ENCODE measurements at regions of chr4 and their contacts with region 1.

Region 1: DNA sequence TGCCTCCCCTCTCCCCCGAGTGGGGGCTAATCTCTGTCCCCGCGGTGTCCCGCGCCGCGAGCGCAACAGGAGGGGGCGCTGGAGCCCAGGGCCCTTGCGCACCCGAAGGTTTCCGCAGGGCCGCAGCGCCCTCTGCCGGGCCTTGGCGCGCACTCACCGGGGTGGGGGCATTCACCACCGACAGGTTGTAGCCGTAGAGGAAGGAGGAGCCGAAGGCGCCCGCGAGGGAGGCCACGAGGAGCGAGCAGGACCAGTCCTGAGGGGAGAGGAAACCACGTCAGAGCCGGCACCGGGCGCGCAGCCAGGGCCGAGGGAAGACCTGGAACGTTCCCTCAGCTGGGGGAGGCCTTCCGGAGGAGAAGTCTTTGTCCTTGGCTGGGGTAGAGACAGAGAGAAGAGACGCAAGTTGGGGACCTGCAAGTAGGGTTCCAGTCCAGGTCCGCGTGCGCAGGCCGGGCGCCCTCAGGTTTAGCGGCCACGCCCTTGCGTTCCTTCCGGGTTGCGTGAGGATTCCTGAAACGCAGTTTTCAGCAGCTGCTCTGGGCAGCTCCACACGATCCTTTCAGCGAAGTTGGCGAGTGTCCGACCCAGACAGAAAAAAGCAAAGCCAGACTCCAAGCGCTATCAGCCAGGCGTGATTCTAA is 2.4 kb downstream of the SLC2A9 start:
- DNase-seq: peak; percentile 99 to 100 (median 99)
- H3K4me3 ChIP-seq: peak overlapping the region; percentile 44
- H3K27ac ChIP-seq: peak overlapping the region; percentile 82 to 90
- H3K4me1 ChIP-seq: peaks cover 4% of the 10 kb centered on the region
- H3K27me3 ChIP-seq: no peaks in the 10 kb centered on the region
- CTCF ChIP-seq: peak; percentile 99 to 100 (median 99)
- EP300 ChIP-seq: no peak
- POLR2A ChIP-seq: peak; percentile 56

Region 2: GRCh38 chr4:9691238-9692065 is 327.5 kb before region 1 on chr4:
- intact Hi-C with region 1: loop called in 1 of 4 experiments (anchors 10 kb)
- DNase-seq: peak; percentile 96 to 98 (median 97)
- H3K4me3 ChIP-seq: peak overlapping the region; percentile 67
- H3K27ac ChIP-seq: peak overlapping the region; percentile 59 to 88
- H3K4me1 ChIP-seq: no peaks in the 10 kb centered on the region
- H3K27me3 ChIP-seq: no peaks in the 10 kb centered on the region
- CTCF ChIP-seq: no peak
- EP300 ChIP-seq: no peak
- POLR2A ChIP-seq: no peak

Region 3: DNA sequence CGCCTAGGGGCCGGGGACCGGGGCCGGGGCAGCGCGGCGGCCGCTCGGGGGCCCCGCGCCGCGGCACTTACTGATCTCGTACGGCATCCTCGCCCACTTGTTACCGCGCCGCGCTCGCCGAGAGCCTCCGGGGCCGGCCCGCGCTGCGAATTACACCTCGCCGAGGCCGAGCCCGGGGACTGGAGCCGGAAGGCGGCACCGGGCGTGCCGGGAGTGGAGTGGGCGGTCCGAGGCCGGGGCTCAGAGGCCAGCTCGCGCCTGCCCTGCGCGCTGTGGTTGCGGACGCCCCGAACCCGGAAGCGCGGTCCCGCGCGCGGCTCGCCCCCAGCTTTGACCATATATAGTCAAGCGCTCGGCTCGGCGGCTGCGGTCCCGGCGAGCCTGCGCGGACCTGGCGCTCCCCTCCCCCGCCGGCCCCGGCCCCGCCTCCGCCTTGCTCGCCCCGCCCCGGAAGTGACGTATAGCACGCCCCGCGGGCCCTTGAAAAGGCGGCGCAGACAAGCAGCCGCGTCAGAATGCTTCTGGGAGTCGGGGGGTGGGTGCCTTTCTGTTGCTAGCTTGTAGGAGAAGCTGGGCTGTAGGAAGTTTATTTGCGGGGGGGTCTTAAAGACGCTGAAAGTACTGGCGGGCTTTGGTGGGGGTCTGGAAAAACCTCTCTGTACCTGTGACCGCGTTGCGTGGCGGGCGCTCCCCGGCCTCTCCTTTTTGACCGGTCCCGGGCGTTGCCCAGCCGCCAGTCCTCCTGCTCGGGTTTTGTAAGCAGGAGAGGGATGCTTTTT is 97.8 kb after region 1 on chr4 and contains the start of gene WDR1:
- intact Hi-C with region 1: loop called in 1 of 4 experiments (anchors 5 kb)
- DNase-seq: peak; percentile 96 to 99 (median 97)
- H3K4me3 ChIP-seq: peak within 1 kb of the TSS; percentile 89
- H3K27ac ChIP-seq: peak within 1 kb of the TSS; percentile 93 to 98
- H3K4me1 ChIP-seq: peaks cover 23% of the 10 kb centered on the region
- H3K27me3 ChIP-seq: no peaks in the 10 kb centered on the region
- CTCF ChIP-seq: peak in 1 of 3 donors; percentile 14
- EP300 ChIP-seq: no peak
- POLR2A ChIP-seq: peak; percentile 95
- total RNA-seq, gene WDR1: 67.2 to 352 (median 260) TPM

Region 4: DNA sequence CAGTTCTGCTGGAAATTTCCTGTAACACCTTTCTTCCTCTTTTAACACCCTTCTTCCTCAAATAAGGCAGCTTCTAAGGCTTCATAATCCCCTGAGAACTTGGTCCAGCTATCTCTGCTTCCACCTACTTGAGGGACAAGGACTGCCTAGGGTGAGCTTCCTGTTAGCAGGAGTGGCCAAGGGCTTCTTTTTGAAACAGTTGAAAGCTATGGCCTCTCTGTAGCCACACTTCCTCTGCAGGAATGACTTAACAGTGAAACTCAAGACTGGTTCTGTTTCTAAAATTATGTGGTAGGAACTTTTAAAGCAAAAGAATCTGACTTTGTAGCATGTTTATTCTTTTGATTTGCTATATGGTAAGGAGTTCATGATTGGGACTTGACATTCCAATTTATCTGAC is 206.2 kb after region 1 on chr4:
- intact Hi-C with region 1: no loop called
- DNase-seq: no peak
- H3K4me3 ChIP-seq: no peak overlapping the region
- H3K27ac ChIP-seq: no peak overlapping the region
- H3K4me1 ChIP-seq: no peaks in the 10 kb centered on the region
- H3K27me3 ChIP-seq: no peaks in the 10 kb centered on the region
- CTCF ChIP-seq: no peak
- EP300 ChIP-seq: no peak
- POLR2A ChIP-seq: no peak

Region 5: DNA sequence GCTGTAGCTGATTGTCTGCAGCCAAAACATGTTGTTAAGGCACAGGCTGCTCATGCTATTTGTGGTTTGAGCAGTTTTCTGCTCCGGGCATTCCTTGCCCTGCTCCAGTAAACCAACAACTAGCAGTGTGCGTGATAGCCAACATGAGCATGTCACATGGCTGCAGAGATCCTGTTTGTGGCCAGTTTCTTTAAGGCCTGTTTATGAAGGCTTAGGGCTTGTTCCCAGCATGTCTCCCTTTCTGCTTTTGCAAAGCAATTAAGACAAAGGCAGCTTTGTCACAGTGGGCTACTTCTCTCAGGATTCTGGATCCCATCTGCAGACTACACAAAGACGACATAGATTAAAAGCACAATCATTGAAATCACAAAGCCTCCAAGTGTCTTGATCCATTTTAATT is 277.8 kb after region 1 on chr4:
- intact Hi-C with region 1: no loop called
- DNase-seq: no peak
- H3K4me3 ChIP-seq: no peak overlapping the region
- H3K27ac ChIP-seq: no peak overlapping the region
- H3K4me1 ChIP-seq: no peaks in the 10 kb centered on the region
- H3K27me3 ChIP-seq: no peaks in the 10 kb centered on the region
- CTCF ChIP-seq: no peak
- EP300 ChIP-seq: no peak
- POLR2A ChIP-seq: no peak

Measured in ovary (tissue), 10 donors.